Esophagus muscularis mucosa (tissue), 4 donors: ENCODE measurements at regions of chr6 and their contacts with region 1.

Region 1: GRCh38 chr6:145887969-145888368 is 73.4 kb upstream of the FBXO30 start:
- DNase-seq: no peak
- H3K4me3 ChIP-seq: no peak overlapping the region
- H3K27ac ChIP-seq: peak overlapping the region; percentile 40 to 66 (median 62)
- H3K4me1 ChIP-seq: peaks cover 6 to 55% (median 41%) of the 10 kb centered on the region in 4 donors
- H3K27me3 ChIP-seq: no peaks in the 10 kb centered on the region
- CTCF ChIP-seq: peak; percentile 65 to 87 (median 77)
- EP300 ChIP-seq: no peak
- POLR2A ChIP-seq: no peak

Region 2: DNA sequence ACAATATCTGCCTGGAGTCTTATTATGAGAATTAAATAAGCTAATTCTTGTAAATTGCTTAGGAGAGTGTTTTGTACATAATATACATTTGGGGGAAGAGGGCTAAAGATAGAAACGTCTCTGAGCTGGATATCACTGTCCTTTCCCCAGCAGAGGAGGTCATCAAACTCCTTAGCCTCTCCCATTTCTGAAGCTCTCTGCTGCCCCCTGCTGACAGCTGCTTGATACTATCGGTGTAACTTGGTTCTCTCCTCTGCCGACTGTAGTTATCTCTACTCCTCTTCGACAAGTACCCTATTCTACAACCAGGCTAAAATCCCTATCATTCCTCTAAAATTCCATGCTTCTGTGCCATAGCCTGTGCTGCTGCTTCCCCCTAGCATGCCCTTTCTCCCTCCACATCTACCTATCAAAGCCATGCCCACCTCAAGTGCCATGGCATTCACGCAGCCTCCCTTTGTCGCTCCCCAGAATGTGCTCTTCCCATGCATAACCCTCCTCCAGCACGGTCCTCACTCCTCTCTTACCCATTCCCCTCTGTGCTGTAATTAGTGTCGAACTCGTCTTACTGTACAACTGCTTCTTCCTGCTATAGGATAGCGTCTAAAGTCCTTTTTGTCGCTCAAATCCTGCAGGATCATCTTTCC is 253.9 kb before region 1 on chr6:
- intact Hi-C with region 1: loop called (anchors 2 kb)
- DNase-seq: no peak
- H3K4me3 ChIP-seq: no peak overlapping the region
- H3K27ac ChIP-seq: no peak overlapping the region
- H3K4me1 ChIP-seq: peaks cover 9 to 22% (median 13%) of the 10 kb centered on the region in 4 donors
- H3K27me3 ChIP-seq: no peaks in the 10 kb centered on the region
- CTCF ChIP-seq: peak; percentile 67 to 89 (median 78)
- EP300 ChIP-seq: no peak
- POLR2A ChIP-seq: no peak

Region 3: DNA sequence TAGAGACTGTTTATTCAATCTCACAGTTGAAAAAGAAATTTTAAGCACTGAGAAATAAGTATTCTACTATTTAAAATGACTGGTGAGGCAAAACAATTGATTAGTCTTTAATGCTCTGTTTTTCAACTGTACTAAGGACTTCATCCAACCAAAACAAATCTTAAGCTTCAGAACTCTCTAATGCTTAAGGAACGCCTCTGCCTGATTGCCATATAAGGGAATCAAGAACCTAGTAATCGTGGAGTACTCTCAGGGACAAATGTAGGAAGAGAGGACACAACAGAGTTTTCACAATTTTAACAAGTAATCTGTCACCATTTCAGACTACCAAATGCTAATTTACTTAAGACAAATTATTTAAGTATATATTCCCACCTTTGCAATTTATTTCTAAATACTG is 89.4 kb before region 1 on chr6:
- intact Hi-C with region 1: no loop called
- DNase-seq: no peak
- H3K4me3 ChIP-seq: peak overlapping the region in 1 of 4 donors; percentile 5
- H3K27ac ChIP-seq: peak overlapping the region; percentile 61 to 76 (median 74)
- H3K4me1 ChIP-seq: peaks cover 0 to 88% (median 69%) of the 10 kb centered on the region in 4 donors
- H3K27me3 ChIP-seq: no peaks in the 10 kb centered on the region
- CTCF ChIP-seq: no peak
- EP300 ChIP-seq: no peak
- POLR2A ChIP-seq: no peak

Region 4: DNA sequence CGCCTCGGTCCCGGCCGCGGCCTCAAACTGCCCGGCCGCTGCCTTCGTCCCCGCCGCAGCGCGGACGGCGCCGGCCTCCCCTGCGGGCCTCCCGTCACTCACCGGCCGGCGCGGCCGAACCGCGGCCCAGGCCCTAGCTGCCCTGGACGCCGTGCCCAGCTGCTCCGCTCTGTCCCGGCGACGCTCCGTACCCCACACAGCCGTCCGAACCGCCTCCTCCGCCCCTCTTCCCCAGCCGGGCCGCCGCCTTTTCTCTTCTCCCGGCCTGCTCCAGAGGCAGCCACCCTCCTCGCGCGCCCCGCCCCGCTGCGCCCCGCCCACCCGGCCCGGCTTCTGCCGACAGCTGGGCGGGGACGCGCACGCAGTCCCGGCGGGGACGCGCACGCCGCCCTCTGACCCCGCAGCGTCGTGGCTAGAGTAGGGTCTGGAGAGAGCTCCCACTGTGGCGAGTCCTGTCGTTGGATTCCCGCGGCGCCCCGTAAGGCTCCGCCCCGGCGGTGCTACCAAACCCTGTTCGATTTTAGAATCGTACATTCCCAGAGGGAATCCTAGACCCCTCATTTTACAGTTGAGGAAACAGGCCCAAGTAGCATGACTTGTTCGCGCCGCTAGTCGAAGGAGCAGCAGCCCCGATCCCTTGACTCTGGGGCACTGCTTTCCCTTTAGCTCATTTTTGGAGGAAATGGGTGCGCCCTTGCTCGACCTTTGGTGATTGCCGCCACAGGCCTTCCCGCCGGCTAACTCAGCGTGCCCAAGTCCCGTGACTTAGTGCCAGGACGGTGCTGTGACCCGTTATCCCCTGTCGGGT is 73.3 kb before region 1 on chr6 and contains the start of gene FBXO30:
- intact Hi-C with region 1: loop called (anchors 2 kb)
- DNase-seq: peak; percentile 98
- H3K4me3 ChIP-seq: peak within 1 kb of the TSS; percentile 75 to 89 (median 81)
- H3K27ac ChIP-seq: peak within 1 kb of the TSS; percentile 93 to 97 (median 96)
- H3K4me1 ChIP-seq: peaks cover 22 to 43% (median 31%) of the 10 kb centered on the region in 4 donors
- H3K27me3 ChIP-seq: no peaks in the 10 kb centered on the region
- CTCF ChIP-seq: peak in 1 of 3 experiments; percentile 33
- EP300 ChIP-seq: no peak
- POLR2A ChIP-seq: peak; percentile 54
- total RNA-seq, gene FBXO30: 47.1 to 92.2 (median 69.3) TPM